ENCODE measurements at regions of chr1 and their contacts with region 1.

Region 1: DNA sequence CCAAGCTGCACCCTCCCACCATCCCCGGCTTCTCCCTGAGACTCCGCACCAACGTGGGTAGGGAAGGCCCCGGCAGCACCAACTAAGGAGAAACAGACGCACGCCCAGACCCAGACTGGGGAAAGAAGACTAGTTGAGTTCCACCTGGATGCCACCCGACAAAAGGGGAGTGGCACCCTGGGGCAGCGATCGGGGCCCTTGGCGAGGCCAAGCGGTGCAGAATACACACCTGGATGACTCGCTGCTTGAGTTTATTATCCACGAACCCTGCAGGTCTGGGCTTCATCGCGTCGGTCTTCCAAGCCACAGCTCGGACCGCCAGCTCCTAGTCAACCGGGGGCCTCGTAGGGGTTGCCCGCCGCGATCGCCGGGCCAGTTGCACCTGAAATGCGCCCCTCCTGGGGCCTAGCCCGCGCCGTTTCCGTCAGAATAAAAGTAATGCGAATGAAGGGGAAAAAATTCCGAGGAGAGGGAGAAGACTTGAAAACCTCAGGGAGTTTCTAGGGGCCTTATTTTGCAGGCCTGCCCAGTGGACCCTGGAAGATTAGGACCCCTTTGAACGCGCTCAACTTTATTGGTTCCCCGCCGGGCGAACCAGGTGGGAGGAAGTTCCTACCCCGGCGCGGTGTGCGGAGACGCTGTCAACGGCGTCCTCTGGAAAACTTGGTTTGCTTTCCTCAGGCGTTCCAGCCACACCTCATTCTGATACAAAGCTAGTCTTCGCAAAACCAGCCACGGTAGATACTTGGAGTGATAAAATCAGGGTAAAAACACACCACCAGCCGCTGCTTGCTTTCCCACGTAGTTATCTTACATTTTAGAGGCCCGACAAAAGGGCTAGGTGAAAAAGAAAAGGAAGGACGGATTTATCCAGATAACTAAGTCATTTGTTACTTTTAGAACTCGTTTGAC is at the start of gene NVL:
- DNase-seq: peak; percentile 87
- H3K4me3 ChIP-seq: peak within 1 kb of the TSS; percentile 71 to 82 (median 78)
- H3K27ac ChIP-seq: peak within 1 kb of the TSS; percentile 79 to 92 (median 84)
- H3K4me1 ChIP-seq: peaks cover 0 to 30% (median 19%) of the 10 kb centered on the region in 4 donors
- H3K27me3 ChIP-seq: no peaks in the 10 kb centered on the region
- CTCF ChIP-seq: no peak
- EP300 ChIP-seq: no peak
- POLR2A ChIP-seq: peak; percentile 38 to 41
- total RNA-seq, gene NVL: 21.4 to 26.6 (median 24.5) TPM

Region 2: GRCh38 chr1:224113918-224114786 is 215.9 kb before region 1 on chr1 and contains the start of gene FBXO28:
- intact Hi-C with region 1: loop called (anchors 1 kb)
- DNase-seq: peak; percentile 98
- H3K4me3 ChIP-seq: peak within 1 kb of the TSS; percentile 71 to 98 (median 84)
- H3K27ac ChIP-seq: peak within 1 kb of the TSS; percentile 90 to 95 (median 92)
- H3K4me1 ChIP-seq: peaks cover 0 to 33% (median 29%) of the 10 kb centered on the region in 4 donors
- H3K27me3 ChIP-seq: peaks cover 0 to 9% (median 0%) of the 10 kb centered on the region in 3 donors
- CTCF ChIP-seq: no peak
- EP300 ChIP-seq: no peak
- POLR2A ChIP-seq: peak; percentile 89 to 90
- total RNA-seq, gene FBXO28: 21.9 to 32.7 (median 26.2) TPM

Region 3: GRCh38 chr1:224356685-224357625 is 26.9 kb after region 1 on chr1 and contains the start of gene CNIH4:
- intact Hi-C with region 1: loop called (anchors 2 kb)
- DNase-seq: peak; percentile 96
- H3K4me3 ChIP-seq: peak within 1 kb of the TSS; percentile 75 to 100 (median 90)
- H3K27ac ChIP-seq: peak within 1 kb of the TSS; percentile 90 to 97 (median 95)
- H3K4me1 ChIP-seq: peaks cover 0 to 29% (median 25%) of the 10 kb centered on the region in 4 donors
- H3K27me3 ChIP-seq: no peaks in the 10 kb centered on the region
- CTCF ChIP-seq: no peak
- EP300 ChIP-seq: no peak
- POLR2A ChIP-seq: peak; percentile 86 to 93
- total RNA-seq, gene CNIH4: 26.0 to 42.8 (median 28.7) TPM